ENCODE measurements at regions of chr5 and their contacts with region 1.

Region 1: GRCh38 chr5:73233347-73234200 is 60.6 kb downstream of the TMEM174 start:
- DNase-seq: no peak
- H3K4me3 ChIP-seq: peak overlapping the region; percentile 29
- H3K27ac ChIP-seq: no peak overlapping the region
- H3K4me1 ChIP-seq: peaks cover 2% of the 10 kb centered on the region
- H3K27me3 ChIP-seq: no peaks in the 10 kb centered on the region
- CTCF ChIP-seq: no peak
- EP300 ChIP-seq: no peak
- POLR2A ChIP-seq: no peak

Region 2: GRCh38 chr5:72938206-72938605 is 295.4 kb before region 1 on chr5:
- intact Hi-C with region 1: no loop called
- DNase-seq: no peak
- H3K4me3 ChIP-seq: no peak overlapping the region
- H3K27ac ChIP-seq: no peak overlapping the region
- H3K4me1 ChIP-seq: no peaks in the 10 kb centered on the region
- H3K27me3 ChIP-seq: no peaks in the 10 kb centered on the region
- CTCF ChIP-seq: no peak
- EP300 ChIP-seq: no peak
- POLR2A ChIP-seq: no peak

Region 3: DNA sequence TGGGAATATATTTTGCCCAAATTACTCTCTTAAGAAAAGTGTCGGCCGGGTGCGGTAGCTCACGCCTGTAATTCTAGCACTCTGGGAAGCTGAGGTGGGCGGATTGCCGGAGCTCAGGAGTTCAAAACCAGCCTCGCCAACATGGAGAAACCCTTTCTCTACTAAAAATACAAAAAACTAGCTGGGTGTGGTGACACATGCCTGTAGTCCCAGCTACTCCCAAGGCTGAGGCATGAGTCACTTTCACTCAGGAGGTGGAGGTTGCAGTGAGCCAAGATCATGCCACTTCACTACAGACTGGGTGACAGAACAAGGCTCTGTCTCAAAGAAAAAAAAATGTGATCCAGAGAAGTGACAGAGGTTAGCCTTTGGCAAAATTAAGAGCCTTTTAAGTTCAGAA is 139.6 kb before region 1 on chr5:
- intact Hi-C with region 1: no loop called
- DNase-seq: no peak
- H3K4me3 ChIP-seq: no peak overlapping the region
- H3K27ac ChIP-seq: no peak overlapping the region
- H3K4me1 ChIP-seq: no peaks in the 10 kb centered on the region
- H3K27me3 ChIP-seq: no peaks in the 10 kb centered on the region
- CTCF ChIP-seq: no peak
- EP300 ChIP-seq: no peak
- POLR2A ChIP-seq: no peak

Region 4: GRCh38 chr5:73448463-73449136 is 215.0 kb after region 1 on chr5 and contains the start of gene FOXD1:
- intact Hi-C with region 1: loop called in 1 of 4 experiments (anchors 10 kb)
- DNase-seq: peak; percentile 35 to 61 (median 42)
- H3K4me3 ChIP-seq: peak within 1 kb of the TSS; percentile 36
- H3K27ac ChIP-seq: no peak within 1 kb of the TSS
- H3K4me1 ChIP-seq: peaks cover 5% of the 10 kb centered on the region
- H3K27me3 ChIP-seq: peaks cover 3% of the 10 kb centered on the region
- CTCF ChIP-seq: no peak
- EP300 ChIP-seq: no peak
- POLR2A ChIP-seq: no peak
- total RNA-seq, gene FOXD1: 0.08 to 0.73 (median 0.11) TPM

Region 5: DNA sequence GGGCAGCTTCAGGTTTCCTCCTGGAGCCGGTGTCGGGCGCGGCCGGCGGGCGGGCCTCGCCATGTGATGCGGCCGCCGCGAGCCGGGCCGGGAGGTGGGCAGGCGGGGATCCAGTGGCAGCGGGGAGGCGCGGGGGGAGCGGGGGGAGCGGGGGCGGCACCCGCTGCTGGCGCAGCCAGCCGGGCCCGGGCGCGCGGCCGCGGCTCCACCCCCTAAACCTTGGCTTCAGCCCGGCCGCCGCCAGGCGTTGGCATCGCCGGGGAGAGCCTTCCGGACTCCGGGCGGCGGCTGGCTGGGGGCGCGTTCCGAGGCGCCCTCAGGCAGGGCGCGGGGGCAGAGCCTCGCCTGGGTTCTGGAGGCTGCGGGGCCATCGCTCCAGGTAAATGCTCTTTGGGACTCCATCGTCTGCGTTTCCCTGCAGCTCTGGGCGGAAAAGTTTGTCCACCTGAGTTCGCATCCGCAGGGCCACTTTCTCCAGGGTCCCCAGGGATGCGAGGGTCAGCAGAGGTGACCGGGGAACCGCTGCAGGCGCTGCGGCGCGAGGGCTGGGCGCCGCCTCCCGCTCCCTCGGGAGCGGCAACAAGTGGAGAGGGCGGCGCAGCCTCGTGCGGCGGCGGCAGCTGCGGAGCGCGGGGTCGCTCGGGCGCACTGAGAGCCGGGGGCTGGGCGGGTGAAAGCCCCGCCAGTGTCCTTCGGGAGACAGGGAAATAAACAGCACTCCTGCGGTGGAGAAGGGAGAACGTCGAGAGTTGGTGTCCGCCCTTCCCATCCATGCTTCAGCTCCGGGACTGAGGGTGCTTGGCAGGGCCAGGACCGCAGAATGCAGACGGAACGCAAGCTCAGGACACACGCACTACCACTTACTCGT is 392.6 kb after region 1 on chr5 and contains the start of gene ARHGEF28:
- intact Hi-C with region 1: no loop called
- DNase-seq: peak; percentile 58 to 78 (median 76)
- H3K4me3 ChIP-seq: peak within 1 kb of the TSS; percentile 64
- H3K27ac ChIP-seq: peak within 1 kb of the TSS; percentile 64 to 82
- H3K4me1 ChIP-seq: peaks cover 3% of the 10 kb centered on the region
- H3K27me3 ChIP-seq: no peaks in the 10 kb centered on the region
- CTCF ChIP-seq: no peak
- EP300 ChIP-seq: no peak
- POLR2A ChIP-seq: no peak
- total RNA-seq, gene ARHGEF28: 29.4 to 75.6 (median 36.6) TPM

Measured in ovary (tissue), 10 donors.